GM10248 (cell line): ENCODE measurements at regions of chr3 and their contacts with region 1.

Region 1: DNA sequence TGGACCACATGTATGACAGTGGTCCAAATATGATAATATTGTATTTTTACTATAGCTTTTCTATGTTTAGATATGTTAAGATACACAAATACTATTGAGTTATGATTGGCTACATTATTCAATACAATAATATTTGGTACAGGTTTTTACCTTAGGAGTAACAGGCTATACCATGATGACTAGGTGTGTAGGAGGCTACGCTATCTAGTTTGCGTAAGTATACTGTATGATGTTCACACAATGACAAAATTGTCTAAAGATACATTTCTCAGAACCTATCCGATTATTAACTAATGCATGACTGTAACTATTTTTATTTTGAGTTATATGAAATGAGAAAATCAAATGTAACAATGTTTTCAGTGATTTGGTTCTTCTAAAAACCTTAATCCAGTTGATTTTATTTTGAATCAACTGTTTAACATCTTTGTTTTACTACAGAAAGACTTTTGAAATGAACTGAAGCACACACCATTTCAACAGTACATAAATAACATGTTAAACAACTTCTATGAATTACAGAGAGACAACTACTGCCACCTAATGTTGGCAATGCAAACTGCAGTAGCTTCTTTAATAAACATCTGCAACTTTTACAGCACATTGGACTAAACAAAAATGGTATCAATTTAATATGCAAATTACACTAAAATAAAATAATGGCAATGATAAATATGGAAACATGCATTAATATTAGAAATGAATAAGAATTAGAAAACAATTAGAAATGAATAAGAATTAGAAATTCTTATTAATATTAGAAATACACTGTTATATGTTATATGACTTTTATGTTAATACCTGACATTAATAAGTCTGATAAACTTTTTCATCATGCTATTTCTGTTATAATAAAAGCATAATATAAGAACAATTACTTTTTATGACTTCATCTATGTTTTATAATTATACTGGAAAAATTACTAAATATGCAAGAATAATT is 255.7 kb downstream of the MBNL1 start:
- DNase-seq: no peak
- CTCF ChIP-seq: peak; percentile 80

Region 2: DNA sequence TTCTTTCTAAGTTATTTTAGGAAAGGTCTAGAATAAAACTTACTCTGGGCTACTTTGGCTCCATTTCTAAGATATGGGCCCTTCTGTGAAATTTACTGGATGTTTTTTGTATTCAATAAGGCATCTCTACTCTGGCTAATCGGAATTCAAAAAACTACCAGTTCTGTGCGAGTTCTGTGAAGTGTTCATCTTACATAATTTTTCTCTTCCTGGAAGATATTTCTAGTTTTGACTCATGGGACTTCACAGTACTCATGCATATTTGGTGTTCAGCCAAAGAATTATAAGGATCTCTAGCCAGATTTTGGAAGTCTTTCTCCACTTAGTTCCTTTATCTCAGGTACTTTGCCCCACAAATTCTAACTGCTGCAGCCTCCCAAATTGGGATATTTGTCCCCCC is 302.1 kb before region 1 on chr3:
- CTCF ChIA-PET with region 1: no interaction called
- POLR2A ChIA-PET with region 1: no interaction called
- DNase-seq: peak; percentile 23
- CTCF ChIP-seq: no peak

Region 3: DNA sequence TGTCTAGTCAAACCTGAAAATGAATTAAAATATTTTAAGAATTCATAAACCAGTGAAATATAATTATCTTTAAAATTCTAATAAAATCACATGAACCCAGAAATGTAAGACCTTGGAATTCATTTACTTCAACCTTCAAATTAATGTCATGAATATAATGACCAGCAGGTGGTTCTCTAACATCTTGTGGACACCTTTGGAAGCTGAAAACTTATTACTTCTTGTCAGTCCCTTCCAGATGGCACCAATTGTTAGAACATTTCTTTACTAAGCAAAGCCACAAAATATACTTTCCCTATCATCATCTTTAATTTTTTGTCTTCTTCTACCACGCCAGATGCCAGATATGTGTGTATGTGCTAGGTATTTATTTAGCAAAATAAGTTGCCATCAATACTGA is 15.8 kb before region 1 on chr3:
- CTCF ChIA-PET with region 1: interaction called, 324 read pairs
- POLR2A ChIA-PET with region 1: no interaction called
- DNase-seq: no peak
- CTCF ChIP-seq: peak; percentile 37